AG04449 (cell line): ENCODE measurements at regions of chr7 and their contacts with region 1.

Region 1: GRCh38 chr7:31122649-31123058 is 70.5 kb downstream of the ADCYAP1R1 start:
- DNase-seq: peak; percentile 60
- H3K4me3 ChIP-seq: no peak overlapping the region
- CTCF ChIP-seq: peak; percentile 77

Region 2: GRCh38 chr7:30575910-30576309 is 546.7 kb before region 1 on chr7:
- CTCF ChIA-PET with region 1: no interaction called
- POLR2A ChIA-PET with region 1: no interaction called
- DNase-seq: no peak
- H3K4me3 ChIP-seq: no peak overlapping the region
- CTCF ChIP-seq: no peak

Region 3: DNA sequence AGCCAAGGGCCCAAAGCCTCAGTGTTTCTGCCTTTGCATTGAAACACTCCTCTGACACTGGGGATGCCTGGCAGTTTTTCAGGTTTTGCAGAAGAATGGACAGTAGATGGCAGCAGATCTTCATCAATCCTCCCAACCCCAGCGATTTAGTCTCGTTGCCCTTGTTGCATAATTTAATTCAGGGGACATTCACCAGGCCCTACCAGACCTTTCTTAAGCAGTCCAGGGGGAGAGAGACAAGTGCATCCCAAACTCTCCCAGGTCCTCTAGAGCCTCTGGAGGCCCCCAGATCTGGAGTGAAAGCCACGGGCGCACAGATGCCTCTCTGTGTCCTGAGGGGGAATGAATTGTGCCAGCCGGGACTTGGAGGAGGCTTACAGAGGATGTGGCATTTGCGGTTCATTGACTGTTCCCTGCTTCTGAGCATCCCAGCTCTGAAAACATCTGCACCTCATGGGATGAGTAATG is 321.8 kb before region 1 on chr7:
- CTCF ChIA-PET with region 1: interaction called, 102 read pairs
- POLR2A ChIA-PET with region 1: interaction called, 4 read pairs
- DNase-seq: no peak
- H3K4me3 ChIP-seq: no peak overlapping the region
- CTCF ChIP-seq: peak; percentile 65

Region 4: DNA sequence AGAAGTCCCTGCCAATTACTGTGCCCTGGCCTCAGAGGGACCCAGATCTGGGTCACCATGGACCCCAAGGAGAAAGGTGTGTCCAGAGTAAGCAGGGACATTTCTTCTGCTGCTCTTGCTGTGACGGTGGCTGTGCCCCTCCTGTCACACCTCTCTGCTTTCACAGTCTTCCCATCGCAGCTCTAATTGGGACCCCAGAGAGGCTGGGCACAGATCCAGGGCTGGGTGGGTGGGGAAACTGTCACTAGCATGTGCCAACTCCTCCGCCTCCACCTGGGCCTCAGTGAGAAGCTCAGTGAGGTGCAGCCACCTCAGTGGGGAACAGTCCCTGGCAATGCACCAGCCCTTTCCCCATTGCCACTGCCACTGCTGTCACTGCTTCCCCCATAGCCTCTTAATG is 107.8 kb before region 1 on chr7:
- CTCF ChIA-PET with region 1: interaction called, 10 read pairs
- POLR2A ChIA-PET with region 1: no interaction called
- DNase-seq: no peak
- H3K4me3 ChIP-seq: no peak overlapping the region
- CTCF ChIP-seq: no peak

Region 5: GRCh38 chr7:31100445-31100844 is 22.2 kb before region 1 on chr7:
- CTCF ChIA-PET with region 1: interaction called, 51 read pairs
- POLR2A ChIA-PET with region 1: no interaction called
- DNase-seq: no peak
- H3K4me3 ChIP-seq: no peak overlapping the region
- CTCF ChIP-seq: no peak

Region 6: GRCh38 chr7:31234836-31235605 is 112.4 kb after region 1 on chr7:
- CTCF ChIA-PET with region 1: no interaction called
- POLR2A ChIA-PET with region 1: no interaction called
- DNase-seq: no peak
- H3K4me3 ChIP-seq: no peak overlapping the region
- CTCF ChIP-seq: no peak